Transverse colon (tissue), 4 donors: ENCODE measurements at regions of chr16 and their contacts with region 1.

Region 1: DNA sequence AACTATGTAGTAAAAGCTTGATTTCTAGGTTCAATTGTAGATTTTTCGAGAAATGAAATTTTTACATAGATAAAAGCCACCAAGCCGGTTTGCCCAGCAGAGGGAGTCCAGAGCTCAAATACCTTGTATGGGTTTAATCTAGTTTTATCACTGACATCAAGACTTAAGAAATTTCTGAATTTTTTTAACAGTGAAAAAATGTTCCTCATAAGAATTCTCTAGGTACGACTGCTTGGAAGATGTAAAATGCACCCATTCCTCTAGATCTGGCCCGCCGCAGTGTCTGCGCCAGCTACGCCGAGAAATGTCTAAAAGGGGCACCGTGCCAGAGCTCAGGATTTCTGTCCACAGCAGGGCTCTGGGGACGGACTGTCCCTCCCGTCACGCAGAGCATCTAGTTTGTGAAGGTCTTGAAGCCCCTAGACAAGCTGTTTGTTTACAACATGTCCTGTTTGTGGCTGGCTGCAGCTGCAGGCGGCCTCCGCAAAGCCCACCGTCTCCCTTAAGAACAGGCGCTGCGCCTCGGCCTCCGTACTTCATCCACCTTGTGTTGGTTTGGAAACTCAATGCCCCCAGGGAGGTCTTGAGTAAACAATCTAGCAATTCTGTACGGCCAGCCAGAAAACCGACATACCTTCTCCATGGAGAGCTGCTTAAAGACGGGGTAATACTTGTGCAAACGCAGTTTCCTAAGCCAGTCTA is 24.8 kb downstream of the MAP1LC3B start:
- DNase-seq: peak; percentile 42
- H3K4me3 ChIP-seq: no peak overlapping the region
- H3K27ac ChIP-seq: no peak overlapping the region
- H3K4me1 ChIP-seq: peaks cover 0 to 10% (median 0%) of the 10 kb centered on the region in 4 donors
- H3K27me3 ChIP-seq: no peaks in the 10 kb centered on the region
- CTCF ChIP-seq: peak; percentile 61 to 72 (median 66)
- EP300 ChIP-seq: no peak
- POLR2A ChIP-seq: no peak

Region 2: GRCh38 chr16:87492721-87493607 is 76.0 kb after region 1 on chr16 and contains the start of gene ZCCHC14:
- in situ Hi-C with region 1: no loop called
- intact Hi-C with region 1: loop called (anchors 10 kb)
- DNase-seq: peak; percentile 100
- H3K4me3 ChIP-seq: peak within 1 kb of the TSS; percentile 40 to 59 (median 54)
- H3K27ac ChIP-seq: peak within 1 kb of the TSS; percentile 77 to 83 (median 80)
- H3K4me1 ChIP-seq: peaks cover 33 to 72% (median 54%) of the 10 kb centered on the region in 4 donors
- H3K27me3 ChIP-seq: no peaks in the 10 kb centered on the region
- CTCF ChIP-seq: no peak
- EP300 ChIP-seq: no peak
- POLR2A ChIP-seq: peak; percentile 11
- total RNA-seq, gene ZCCHC14: 27.7 to 56.1 (median 36.7) TPM

Region 3: DNA sequence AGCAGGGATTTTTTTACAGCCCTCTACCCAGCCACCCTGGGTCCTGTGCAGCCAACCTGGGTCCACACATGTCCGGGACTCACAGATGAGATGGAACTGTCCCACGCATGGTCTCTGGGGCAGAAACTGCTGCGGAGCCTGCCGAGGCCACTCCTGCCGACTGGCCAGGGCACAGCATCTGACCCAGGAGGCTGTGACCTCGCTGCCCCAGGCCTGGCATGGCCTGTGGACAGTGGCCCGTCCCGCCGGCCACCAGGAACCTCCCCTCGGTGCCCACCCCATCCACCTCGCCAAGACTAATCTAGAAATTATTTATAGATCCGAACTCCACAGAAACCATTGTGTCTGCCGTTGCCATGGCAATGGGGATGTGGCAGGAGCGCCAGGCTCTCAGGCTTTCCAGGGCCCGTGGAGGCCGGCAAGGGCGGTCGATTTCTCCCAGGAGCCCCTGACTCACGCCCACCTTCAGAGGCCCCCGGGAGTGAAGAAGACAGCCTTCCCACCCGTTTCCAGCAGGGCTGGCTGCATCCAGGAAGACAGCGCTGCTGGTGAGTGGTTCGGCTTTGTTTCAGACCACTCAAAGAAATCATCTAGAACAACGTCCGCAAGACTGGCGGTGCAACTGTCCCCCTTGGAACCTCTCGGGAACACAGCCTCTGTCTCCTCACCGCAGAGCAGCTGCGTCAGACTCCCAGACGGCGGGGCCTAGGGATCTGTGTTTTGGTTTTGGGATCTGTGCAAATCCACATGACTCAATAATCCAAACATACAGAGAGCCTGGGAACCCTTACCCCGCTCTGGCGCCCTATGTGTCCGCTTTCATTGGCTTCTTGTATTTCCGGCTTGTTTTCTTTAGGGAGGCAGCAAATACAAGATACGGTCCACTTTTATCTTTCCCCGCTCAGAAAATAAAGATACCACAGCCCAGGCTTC is 124.2 kb after region 1 on chr16:
- in situ Hi-C with region 1: no loop called
- intact Hi-C with region 1: loop called (anchors 10 kb)
- DNase-seq: peak; percentile 33
- H3K4me3 ChIP-seq: peak overlapping the region in 1 of 4 donors; percentile 2
- H3K27ac ChIP-seq: peak overlapping the region; percentile 57 to 76 (median 68)
- H3K4me1 ChIP-seq: peaks cover 0 to 14% (median 0%) of the 10 kb centered on the region in 4 donors
- H3K27me3 ChIP-seq: peaks cover 21% of the 10 kb centered on the region
- CTCF ChIP-seq: no peak
- EP300 ChIP-seq: no peak
- POLR2A ChIP-seq: no peak

Region 4: DNA sequence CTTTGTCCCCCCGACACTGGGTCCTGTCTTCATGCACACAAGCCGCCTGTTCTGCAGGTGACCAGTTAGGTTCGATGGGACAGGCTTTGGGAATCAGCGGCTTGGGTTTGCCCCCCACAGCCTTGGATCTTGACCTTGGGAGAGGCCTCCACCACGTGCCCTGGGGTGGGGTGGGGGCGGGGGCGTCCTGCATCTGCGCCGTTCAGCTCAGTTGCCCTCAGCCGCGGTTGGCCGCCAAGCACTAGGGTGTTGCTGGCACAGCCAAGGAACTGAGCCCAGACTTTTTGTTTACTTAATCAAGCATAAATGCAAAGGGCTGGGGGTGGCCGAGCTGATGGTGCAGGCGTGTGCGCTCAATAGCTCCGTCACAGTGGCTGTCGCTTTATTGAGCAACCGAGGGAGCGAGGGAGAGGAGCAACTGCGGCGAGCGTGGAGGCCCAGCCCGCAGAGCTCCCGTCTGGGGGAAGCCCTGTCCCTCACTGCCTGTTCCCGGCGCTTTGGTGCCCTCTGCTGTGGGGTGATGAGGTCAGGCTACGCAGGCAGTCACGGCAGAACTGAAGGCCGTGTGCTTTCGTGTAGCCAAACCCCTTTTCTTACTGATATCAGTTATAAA is 219.2 kb after region 1 on chr16:
- in situ Hi-C with region 1: loop called in 2 of 4 experiments (anchors 10 to 25 kb)
- intact Hi-C with region 1: loop called (anchors 10 kb)
- DNase-seq: peak; percentile 84
- H3K4me3 ChIP-seq: peak overlapping the region in 2 of 4 donors; percentile 13 to 20
- H3K27ac ChIP-seq: no peak overlapping the region
- H3K4me1 ChIP-seq: peaks cover 8 to 18% (median 12%) of the 10 kb centered on the region in 4 donors
- H3K27me3 ChIP-seq: peaks cover 32% of the 10 kb centered on the region
- CTCF ChIP-seq: peak; percentile 39 to 63 (median 60)
- EP300 ChIP-seq: no peak
- POLR2A ChIP-seq: no peak

Region 5: GRCh38 chr16:87648236-87648635 is 231.3 kb after region 1 on chr16:
- in situ Hi-C with region 1: loop called in 1 of 4 experiments (anchors 25 kb)
- intact Hi-C with region 1: loop called (anchors 10 kb)
- DNase-seq: no peak
- H3K4me3 ChIP-seq: no peak overlapping the region
- H3K27ac ChIP-seq: no peak overlapping the region
- H3K4me1 ChIP-seq: no peaks in the 10 kb centered on the region
- H3K27me3 ChIP-seq: peaks cover 42% of the 10 kb centered on the region
- CTCF ChIP-seq: no peak
- EP300 ChIP-seq: no peak
- POLR2A ChIP-seq: no peak

Region 6: DNA sequence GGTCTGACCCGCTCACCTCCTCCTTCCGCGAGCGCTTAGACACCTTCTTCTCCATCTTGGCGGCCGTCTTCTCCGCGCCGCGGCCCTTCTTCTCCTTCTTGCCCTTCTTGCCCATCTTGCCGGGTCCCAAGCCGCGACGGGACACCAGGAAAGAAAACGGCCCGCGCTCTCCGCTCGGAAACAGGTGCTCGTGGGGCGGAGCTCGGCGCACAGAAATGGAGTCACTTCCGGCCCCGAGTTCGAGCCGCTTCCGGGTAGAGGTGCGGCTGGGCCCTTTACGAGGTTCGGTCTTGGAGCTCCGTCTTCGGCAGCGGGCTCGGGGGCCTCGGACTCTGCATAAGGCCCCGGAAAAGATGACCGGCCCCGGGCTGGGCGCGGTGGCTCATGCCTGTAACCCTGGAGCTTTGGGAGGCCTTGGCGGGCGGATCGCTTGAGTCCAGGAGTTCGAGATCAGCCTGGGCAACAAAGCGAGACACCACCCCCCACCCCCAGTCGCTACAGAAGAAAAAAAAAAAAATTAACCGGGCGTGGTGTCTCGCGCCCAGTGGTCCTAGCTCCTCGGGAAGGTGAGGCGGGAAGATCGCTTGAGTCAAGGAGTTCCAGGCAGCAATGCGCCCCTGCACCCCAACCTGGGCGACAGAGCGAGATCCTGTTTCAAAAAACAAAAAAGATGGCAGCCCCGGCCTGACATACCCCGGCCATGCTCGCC is 349.0 kb after region 1 on chr16 and contains the start of gene KLHDC4:
- in situ Hi-C with region 1: loop called in 1 of 4 experiments (anchors 25 kb)
- intact Hi-C with region 1: no loop called
- DNase-seq: peak; percentile 94
- H3K4me3 ChIP-seq: peak within 1 kb of the TSS; percentile 66 to 97 (median 96)
- H3K27ac ChIP-seq: peak within 1 kb of the TSS; percentile 86 to 96 (median 94)
- H3K4me1 ChIP-seq: peaks cover 4 to 27% (median 16%) of the 10 kb centered on the region in 4 donors
- H3K27me3 ChIP-seq: no peaks in the 10 kb centered on the region
- CTCF ChIP-seq: no peak
- EP300 ChIP-seq: no peak
- POLR2A ChIP-seq: peak; percentile 82
- total RNA-seq, gene KLHDC4: 45.2 to 193 (median 57.4) TPM